ENCODE measurements at regions of chr2 and their contacts with region 1.

Region 1: GRCh38 chr2:165114346-165114939 is 89.4 kb downstream of the SCN3A start:
- DNase-seq: peak; percentile 71
- ATAC-seq: peak; percentile 95
- H3K4me3 ChIP-seq: no peak overlapping the region
- H3K27ac ChIP-seq: no peak overlapping the region
- H3K4me1 ChIP-seq: peaks cover 7% of the 10 kb centered on the region
- H3K27me3 ChIP-seq: no peaks in the 10 kb centered on the region
- CTCF ChIP-seq: no peak

Region 2: GRCh38 chr2:165161510-165161909 is 47.1 kb after region 1 on chr2:
- CTCF ChIA-PET with region 1: no interaction called
- POLR2A ChIA-PET with region 1: no interaction called
- intact Hi-C with region 1: loop called (anchors 1 kb)
- DNase-seq: peak; percentile 55
- ATAC-seq: peak; percentile 82
- H3K4me3 ChIP-seq: no peak overlapping the region
- H3K27ac ChIP-seq: peak overlapping the region; percentile 60
- H3K4me1 ChIP-seq: peaks cover 3% of the 10 kb centered on the region; the same call in 1 of the 2 replicates
- H3K27me3 ChIP-seq: no peaks in the 10 kb centered on the region
- CTCF ChIP-seq: no peak

Region 3: GRCh38 chr2:165182029-165182428 is 67.6 kb after region 1 on chr2:
- CTCF ChIA-PET with region 1: no interaction called
- POLR2A ChIA-PET with region 1: no interaction called
- intact Hi-C with region 1: no loop called
- DNase-seq: no peak
- ATAC-seq: no peak
- H3K4me3 ChIP-seq: no peak overlapping the region
- H3K27ac ChIP-seq: no peak overlapping the region
- H3K4me1 ChIP-seq: no peaks in the 10 kb centered on the region
- H3K27me3 ChIP-seq: peaks cover 10% of the 10 kb centered on the region; the same call in 1 of the 2 replicates
- CTCF ChIP-seq: no peak